ENCODE measurements at regions of chr12 and their contacts with region 1.

Region 1: DNA sequence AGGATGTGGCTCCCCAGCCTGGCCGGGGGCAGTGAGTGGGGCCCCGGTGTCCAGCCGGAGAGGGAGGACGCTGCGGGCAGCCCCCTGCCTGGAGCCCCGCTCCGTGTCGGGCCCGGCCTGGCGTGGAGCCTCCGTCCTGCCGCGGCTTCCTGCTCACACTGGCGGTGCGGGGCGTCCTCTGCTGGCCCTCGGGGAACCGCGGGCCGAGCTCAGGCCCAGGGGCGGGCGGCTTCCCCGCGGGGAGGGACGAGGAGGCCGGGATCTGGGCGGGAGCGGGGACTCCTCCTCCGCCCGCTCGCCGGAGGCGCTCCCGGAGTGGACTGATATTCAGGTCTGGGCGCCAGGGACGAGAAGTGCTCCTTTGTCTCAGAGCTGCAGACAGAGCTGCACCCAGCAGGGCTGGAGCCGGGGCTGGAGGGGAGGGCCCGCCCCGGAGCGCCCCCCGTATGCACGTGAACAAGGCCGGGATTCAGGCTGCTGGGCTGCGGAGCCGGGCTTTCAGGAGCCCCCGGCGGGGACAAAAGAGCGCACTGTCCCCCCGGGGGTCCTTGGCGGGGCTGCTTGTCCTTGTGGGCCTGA is 2.2 kb downstream of the MMP17 start:
- DNase-seq: peak; percentile 77 to 88
- H3K4me3 ChIP-seq: peak overlapping the region; percentile 33
- H3K4me3 Mint-ChIP-seq: peak overlapping the region; percentile 72
- H3K27ac Mint-ChIP-seq: no peak overlapping the region
- H3K4me1 ChIP-seq: peaks cover 29% of the 10 kb centered on the region
- H3K4me1 Mint-ChIP-seq: no peaks in the 10 kb centered on the region
- H3K27me3 ChIP-seq: peaks cover 1% of the 10 kb centered on the region
- H3K27me3 Mint-ChIP-seq: peaks cover 7% of the 10 kb centered on the region
- CTCF ChIP-seq: peak; percentile 13 to 46

Region 2: GRCh38 chr12:131104463-131105350 is 725.7 kb before region 1 on chr12:
- CTCF ChIA-PET with region 1: interaction called, 6 read pairs
- POLR2A ChIA-PET with region 1: no interaction called
- intact Hi-C with region 1: loop called (anchors 10 kb)
- DNase-seq: peak; percentile 82 to 88
- H3K4me3 ChIP-seq: no peak overlapping the region
- H3K4me3 Mint-ChIP-seq: no peak overlapping the region
- H3K27ac Mint-ChIP-seq: no peak overlapping the region
- H3K4me1 ChIP-seq: no peaks in the 10 kb centered on the region
- H3K4me1 Mint-ChIP-seq: no peaks in the 10 kb centered on the region
- H3K27me3 ChIP-seq: no peaks in the 10 kb centered on the region
- H3K27me3 Mint-ChIP-seq: no peaks in the 10 kb centered on the region
- CTCF ChIP-seq: peak; percentile 94

Region 3: DNA sequence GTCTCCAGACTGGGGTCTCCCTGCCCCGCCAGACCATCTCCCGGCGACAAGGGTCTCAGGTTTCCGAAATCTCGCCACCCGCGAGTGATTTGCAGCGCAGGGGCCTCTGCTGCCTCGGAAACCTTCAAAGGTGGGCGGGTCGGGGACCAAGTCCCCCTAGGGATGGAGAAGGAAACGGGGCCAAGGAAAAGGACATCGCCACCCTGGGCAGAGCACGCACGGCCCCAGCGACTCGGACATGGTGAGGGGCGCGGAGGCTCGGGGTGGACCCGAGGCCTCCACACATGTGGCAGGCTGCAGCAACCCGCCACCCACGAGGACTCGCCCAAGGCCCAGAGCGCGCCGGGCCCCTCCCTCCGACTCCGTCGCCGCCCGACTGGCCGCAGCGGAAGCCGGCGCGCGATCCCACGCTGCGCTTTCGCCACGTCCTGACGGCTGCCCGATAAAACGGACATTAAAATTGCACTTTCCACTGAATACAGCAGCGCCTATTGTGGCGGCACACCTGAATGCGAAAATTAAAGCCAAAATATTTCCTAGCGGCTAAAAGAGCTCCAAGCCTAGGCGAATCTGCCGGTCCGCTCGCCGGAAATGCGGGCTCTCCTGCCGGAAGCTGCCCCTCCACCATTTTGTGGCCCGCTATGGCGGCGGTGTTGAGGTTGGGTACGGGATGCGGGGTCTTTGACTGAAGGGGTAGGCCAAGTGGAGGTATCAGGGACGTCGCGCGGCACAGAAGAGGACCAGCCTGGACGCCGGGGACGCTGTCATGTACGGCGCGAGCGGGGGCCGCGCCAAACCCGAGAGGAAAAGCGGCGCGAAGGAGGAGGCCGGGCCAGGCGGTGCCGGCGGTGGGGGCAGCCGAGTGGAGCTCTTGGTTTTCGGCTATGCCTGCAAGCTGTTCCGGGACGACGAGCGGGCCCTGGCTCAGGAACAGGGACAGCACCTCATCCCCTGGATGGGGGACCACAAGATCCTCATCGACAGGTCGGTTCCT is 119.7 kb before region 1 on chr12 and contains the start of gene SFSWAP:
- CTCF ChIA-PET with region 1: no interaction called
- POLR2A ChIA-PET with region 1: no interaction called
- intact Hi-C with region 1: loop called (anchors 5 kb)
- DNase-seq: peak; percentile 69 to 80
- H3K4me3 ChIP-seq: peak within 1 kb of the TSS; percentile 89
- H3K4me3 Mint-ChIP-seq: peak within 1 kb of the TSS; percentile 97
- H3K27ac Mint-ChIP-seq: peak within 1 kb of the TSS; percentile 99
- H3K4me1 ChIP-seq: peaks cover 14% of the 10 kb centered on the region
- H3K4me1 Mint-ChIP-seq: peaks cover 6% of the 10 kb centered on the region
- H3K27me3 ChIP-seq: no peaks in the 10 kb centered on the region
- H3K27me3 Mint-ChIP-seq: no peaks in the 10 kb centered on the region
- CTCF ChIP-seq: no peak
- total RNA-seq, gene SFSWAP: 42.3 and 46.1 TPM in 2 replicates

Region 4: DNA sequence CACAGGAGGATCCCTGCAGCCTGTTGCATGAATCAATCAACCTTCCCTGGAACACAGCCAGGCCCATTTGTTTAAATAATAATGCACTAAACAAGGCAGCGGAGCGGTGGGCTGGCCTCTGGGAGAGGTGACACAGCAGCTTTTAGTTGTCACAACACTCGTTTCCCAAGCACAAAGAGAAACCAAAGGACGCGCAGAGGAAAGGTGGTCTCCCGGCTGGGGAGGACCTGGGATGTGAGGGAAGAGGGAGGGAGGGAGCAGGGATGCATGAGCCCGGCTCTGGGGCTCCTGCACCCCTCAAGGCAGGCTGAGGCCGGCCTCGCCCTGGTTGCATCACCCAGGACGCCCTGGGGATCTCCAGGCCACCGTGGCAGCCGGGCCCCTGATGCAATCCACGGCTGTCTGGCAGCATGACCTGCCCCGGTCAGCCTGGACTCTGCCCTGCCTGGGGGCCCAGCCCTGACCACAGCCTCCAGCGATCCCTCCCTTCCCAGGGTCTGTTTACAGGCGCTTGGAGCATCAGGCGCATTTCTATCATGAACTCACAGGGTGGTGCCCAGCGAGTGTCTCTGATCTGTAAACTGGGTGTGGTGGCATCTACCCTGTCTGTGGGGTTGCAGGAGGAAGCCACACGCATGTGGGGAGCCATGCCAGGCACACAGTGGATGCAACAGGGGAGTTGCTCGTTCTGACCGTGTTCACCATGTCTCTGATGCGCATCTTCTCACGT is 30.3 kb after region 1 on chr12:
- CTCF ChIA-PET with region 1: no interaction called
- POLR2A ChIA-PET with region 1: no interaction called
- intact Hi-C with region 1: loop called (anchors 2 kb)
- DNase-seq: peak; percentile 96
- H3K4me3 ChIP-seq: peak overlapping the region; percentile 6; the same call in 1 of the 2 replicates
- H3K4me3 Mint-ChIP-seq: peak overlapping the region; percentile 68
- H3K27ac Mint-ChIP-seq: peak overlapping the region; percentile 100
- H3K4me1 ChIP-seq: peaks cover 38% of the 10 kb centered on the region
- H3K4me1 Mint-ChIP-seq: peaks cover 49% of the 10 kb centered on the region
- H3K27me3 ChIP-seq: no peaks in the 10 kb centered on the region
- H3K27me3 Mint-ChIP-seq: no peaks in the 10 kb centered on the region
- CTCF ChIP-seq: no peak

Region 5: DNA sequence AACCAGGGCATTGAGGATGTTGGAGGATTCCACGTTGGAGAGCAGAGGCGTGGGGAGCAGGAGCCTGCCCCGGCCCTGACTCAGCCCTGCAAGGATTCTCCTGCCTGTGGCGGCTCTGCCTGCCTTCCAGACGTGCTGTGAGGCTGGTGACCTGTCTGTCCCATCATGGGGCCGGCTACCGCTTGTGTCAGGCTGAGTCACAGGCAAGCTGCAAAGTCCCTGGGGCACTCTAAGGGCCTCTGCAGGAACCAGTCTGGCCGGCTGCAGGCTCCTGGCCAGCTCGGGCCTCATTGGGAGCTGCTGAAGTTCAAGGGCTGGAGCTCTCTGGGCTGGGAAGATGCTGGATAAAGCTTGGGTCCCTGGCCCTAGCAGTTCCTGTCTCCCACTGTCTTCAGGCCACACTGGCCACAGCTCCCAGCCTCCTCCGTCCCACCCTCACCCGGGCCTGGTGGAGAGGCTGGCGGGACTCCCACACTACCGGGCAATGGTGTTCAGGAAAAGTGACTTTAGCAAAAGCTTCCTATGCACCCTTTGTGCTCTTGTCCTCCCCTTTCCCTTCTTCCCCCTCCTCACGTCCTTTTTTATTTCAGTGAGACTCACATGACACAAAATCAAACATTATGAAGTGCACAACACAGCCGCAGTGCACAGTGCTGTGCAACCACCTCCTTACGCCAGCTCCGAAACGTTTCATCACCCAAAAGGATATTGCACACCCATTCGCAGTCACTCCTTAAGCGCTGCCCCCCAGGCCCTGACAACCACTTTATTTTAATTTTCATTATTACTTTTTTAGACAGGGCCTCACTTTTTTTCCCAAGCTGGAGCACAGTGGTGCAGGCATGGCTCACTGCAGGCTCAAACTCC is 42.0 kb after region 1 on chr12:
- CTCF ChIA-PET with region 1: no interaction called
- POLR2A ChIA-PET with region 1: no interaction called
- intact Hi-C with region 1: no loop called
- DNase-seq: peak; percentile 60 to 77
- H3K4me3 ChIP-seq: no peak overlapping the region
- H3K4me3 Mint-ChIP-seq: no peak overlapping the region
- H3K27ac Mint-ChIP-seq: no peak overlapping the region
- H3K4me1 ChIP-seq: peaks cover 11% of the 10 kb centered on the region
- H3K4me1 Mint-ChIP-seq: peaks cover 6% of the 10 kb centered on the region
- H3K27me3 ChIP-seq: no peaks in the 10 kb centered on the region
- H3K27me3 Mint-ChIP-seq: no peaks in the 10 kb centered on the region
- CTCF ChIP-seq: no peak

Region 6: DNA sequence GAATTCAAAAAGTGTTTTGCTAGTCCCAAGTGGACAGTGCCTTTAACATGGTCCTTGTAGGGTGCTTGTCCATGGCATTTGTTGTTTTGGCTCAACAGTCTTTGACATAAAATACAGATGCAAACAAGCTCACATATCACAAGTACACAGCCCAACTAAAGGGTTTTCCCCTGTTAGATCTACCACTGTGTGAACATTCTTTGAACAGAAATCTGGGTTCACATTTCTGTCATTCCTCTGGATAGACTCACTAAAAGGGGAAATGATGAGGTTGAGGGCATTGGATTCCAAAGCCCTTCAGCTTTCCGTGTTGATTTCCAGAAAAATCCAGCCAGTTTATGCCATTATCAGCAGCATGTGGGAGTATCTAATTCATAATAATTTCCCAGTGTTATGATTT is 173.4 kb after region 1 on chr12:
- CTCF ChIA-PET with region 1: no interaction called
- POLR2A ChIA-PET with region 1: no interaction called
- intact Hi-C with region 1: loop called (anchors 1 kb)
- DNase-seq: no peak
- H3K4me3 ChIP-seq: no peak overlapping the region
- H3K4me3 Mint-ChIP-seq: no peak overlapping the region
- H3K27ac Mint-ChIP-seq: no peak overlapping the region
- H3K4me1 ChIP-seq: no peaks in the 10 kb centered on the region
- H3K4me1 Mint-ChIP-seq: peaks cover 12% of the 10 kb centered on the region
- H3K27me3 ChIP-seq: no peaks in the 10 kb centered on the region
- H3K27me3 Mint-ChIP-seq: no peaks in the 10 kb centered on the region
- CTCF ChIP-seq: no peak